CD4-positive, alpha-beta T cell (primary cell): ENCODE measurements at regions of chr11 and their contacts with region 1.

Region 1: DNA sequence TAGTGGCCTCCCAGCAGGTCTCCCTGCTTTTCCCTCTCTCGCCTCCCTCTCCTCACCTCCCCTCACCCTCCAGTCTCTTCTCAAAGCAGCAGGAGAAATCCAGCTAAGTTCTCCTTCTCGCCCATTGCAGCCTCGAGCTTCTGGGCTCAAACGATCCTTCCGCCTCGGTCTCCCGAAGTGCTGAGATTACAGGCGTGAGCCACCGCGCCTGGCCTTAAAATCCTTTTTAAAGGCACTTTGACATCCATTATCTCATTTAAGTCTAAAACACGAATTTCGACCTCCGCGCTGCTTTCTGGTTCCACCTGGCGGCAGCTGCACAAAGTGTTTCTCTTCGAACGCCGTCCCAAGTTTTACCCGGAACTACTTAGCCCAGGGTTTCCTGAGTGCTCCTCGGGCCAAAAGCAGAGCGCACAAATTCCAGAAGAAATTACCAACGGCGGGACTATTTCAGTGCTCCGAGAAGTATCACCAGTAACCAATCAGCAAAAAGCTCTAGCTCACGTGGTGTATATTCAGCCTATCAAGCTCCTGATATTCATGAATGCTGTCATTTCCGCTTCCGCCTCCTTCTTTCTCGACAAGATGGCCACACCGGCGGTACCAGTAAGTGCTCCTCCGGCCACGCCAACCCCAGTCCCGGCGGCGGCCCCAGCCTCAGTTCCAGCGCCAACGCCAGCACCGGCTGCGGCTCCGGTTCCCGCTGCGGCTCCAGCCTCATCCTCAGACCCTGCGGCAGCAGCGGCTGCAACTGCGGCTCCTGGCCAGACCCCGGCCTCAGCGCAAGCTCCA is at the start of gene EIF3F:
- DNase-seq: peak; percentile 78 to 99 (median 85)
- ATAC-seq: peak; percentile 95
- H3K4me3 ChIP-seq: peak within 1 kb of the TSS; percentile 67
- H3K4me3 Mint-ChIP-seq: peak within 1 kb of the TSS; percentile 88
- H3K27ac ChIP-seq: peak within 1 kb of the TSS; percentile 52 to 73
- H3K27ac Mint-ChIP-seq: peak within 1 kb of the TSS; percentile 79
- H3K4me1 ChIP-seq: peaks cover 27% of the 10 kb centered on the region
- H3K4me1 Mint-ChIP-seq: peaks cover 47% of the 10 kb centered on the region
- H3K27me3 ChIP-seq: no peaks in the 10 kb centered on the region
- H3K27me3 Mint-ChIP-seq: no peaks in the 10 kb centered on the region
- CTCF ChIP-seq: peak; percentile 92
- total RNA-seq, gene EIF3F: 338 to 348 TPM

Region 2: GRCh38 chr11:6481012-6481923 is 1505.7 kb before region 1 on chr11 and contains the starts of genes ARFIP2 and TIMM10B:
- CTCF ChIA-PET with region 1: no interaction called
- POLR2A ChIA-PET with region 1: interaction called, 3 read pairs
- intact Hi-C with region 1: loop called in 1 of 2 experiments (anchors 5 kb)
- DNase-seq: peak; percentile 92 to 99 (median 96)
- ATAC-seq: peak; percentile 94
- H3K4me3 ChIP-seq: peak within 1 kb of the TSS; percentile 83
- H3K4me3 Mint-ChIP-seq: peak within 1 kb of the TSS; percentile 98
- H3K27ac ChIP-seq: peak within 1 kb of the TSS; percentile 87 to 95
- H3K27ac Mint-ChIP-seq: peak within 1 kb of the TSS; percentile 99
- H3K4me1 ChIP-seq: peaks cover 39% of the 10 kb centered on the region
- H3K4me1 Mint-ChIP-seq: peaks cover 42% of the 10 kb centered on the region
- H3K27me3 ChIP-seq: no peaks in the 10 kb centered on the region
- H3K27me3 Mint-ChIP-seq: no peaks in the 10 kb centered on the region
- CTCF ChIP-seq: no peak
- total RNA-seq, gene ARFIP2: 78.1 to 80.5 TPM
- total RNA-seq, gene TIMM10B: 68.5 to 68.6 TPM

Region 3: DNA sequence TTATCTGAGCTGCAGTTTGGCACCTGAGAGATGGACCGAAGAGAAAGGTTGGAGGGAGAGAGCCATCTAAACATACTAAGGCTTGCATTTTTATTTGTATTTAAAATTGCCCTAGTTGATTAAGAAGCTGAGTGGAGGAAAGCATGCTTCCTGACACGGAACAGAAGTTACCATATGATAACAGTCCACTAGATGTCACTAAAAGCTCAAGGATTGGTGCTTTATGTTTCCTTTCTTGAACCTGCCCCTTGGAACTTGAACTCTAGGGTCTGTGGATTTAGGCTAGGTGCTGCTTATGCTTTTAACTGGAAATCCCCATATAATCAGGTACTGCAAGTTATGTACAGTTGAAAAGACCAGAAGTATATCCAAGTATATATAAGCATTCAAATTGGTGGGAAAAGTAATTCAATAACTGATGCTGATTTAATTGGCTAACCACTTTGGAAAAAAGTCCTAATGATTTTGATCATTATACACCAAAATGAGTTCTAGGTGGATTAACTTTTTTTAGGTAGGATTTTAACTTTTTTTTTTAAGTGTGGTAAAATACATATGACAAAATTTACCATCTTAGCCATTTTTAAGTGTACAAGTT is 888.6 kb before region 1 on chr11:
- CTCF ChIA-PET with region 1: no interaction called
- POLR2A ChIA-PET with region 1: interaction called, 3 read pairs
- intact Hi-C with region 1: loop called in 1 of 2 experiments (anchors 10 kb)
- DNase-seq: peak in 3 of 14 experiments; percentile 47 to 73 (median 64)
- ATAC-seq: peak; percentile 54
- H3K4me3 ChIP-seq: no peak overlapping the region
- H3K4me3 Mint-ChIP-seq: no peak overlapping the region
- H3K27ac ChIP-seq: no peak overlapping the region
- H3K27ac Mint-ChIP-seq: no peak overlapping the region
- H3K4me1 ChIP-seq: no peaks in the 10 kb centered on the region
- H3K4me1 Mint-ChIP-seq: no peaks in the 10 kb centered on the region
- H3K27me3 ChIP-seq: peaks cover 0 to 30% of the 10 kb centered on the region in 2 experiments
- H3K27me3 Mint-ChIP-seq: peaks cover 31% of the 10 kb centered on the region
- CTCF ChIP-seq: peak; percentile 72

Region 4: GRCh38 chr11:7688238-7688826 is 298.6 kb before region 1 on chr11:
- CTCF ChIA-PET with region 1: no interaction called
- POLR2A ChIA-PET with region 1: no interaction called
- intact Hi-C with region 1: loop called in 1 of 2 experiments (anchors 10 kb)
- DNase-seq: peak in 4 of 14 experiments; percentile 13 to 55 (median 36)
- ATAC-seq: peak; percentile 51
- H3K4me3 ChIP-seq: no peak overlapping the region
- H3K4me3 Mint-ChIP-seq: no peak overlapping the region
- H3K27ac ChIP-seq: no peak overlapping the region
- H3K27ac Mint-ChIP-seq: no peak overlapping the region
- H3K4me1 ChIP-seq: no peaks in the 10 kb centered on the region
- H3K4me1 Mint-ChIP-seq: no peaks in the 10 kb centered on the region
- H3K27me3 ChIP-seq: peaks cover 8 to 28% of the 10 kb centered on the region in 2 experiments
- H3K27me3 Mint-ChIP-seq: peaks cover 47% of the 10 kb centered on the region
- CTCF ChIP-seq: peak; percentile 89

Region 5: GRCh38 chr11:8020244-8020597 is 33.3 kb after region 1 on chr11:
- CTCF ChIA-PET with region 1: interaction called, 10 read pairs
- POLR2A ChIA-PET with region 1: interaction called, 3 read pairs
- intact Hi-C with region 1: no loop called
- DNase-seq: peak in 1 of 14 experiments; percentile 31
- ATAC-seq: no peak
- H3K4me3 ChIP-seq: peak overlapping the region; percentile 44
- H3K4me3 Mint-ChIP-seq: peak overlapping the region; percentile 87
- H3K27ac ChIP-seq: no peak overlapping the region
- H3K27ac Mint-ChIP-seq: no peak overlapping the region
- H3K4me1 ChIP-seq: peaks cover 13% of the 10 kb centered on the region
- H3K4me1 Mint-ChIP-seq: peaks cover 20% of the 10 kb centered on the region
- H3K27me3 ChIP-seq: peaks cover 16 to 41% of the 10 kb centered on the region in 2 experiments
- H3K27me3 Mint-ChIP-seq: peaks cover 51% of the 10 kb centered on the region
- CTCF ChIP-seq: no peak

Region 6: GRCh38 chr11:8964324-8965320 is 977.7 kb after region 1 on chr11 and contains the start of gene TMEM9B:
- CTCF ChIA-PET with region 1: no interaction called
- POLR2A ChIA-PET with region 1: interaction called, 4 read pairs
- intact Hi-C with region 1: loop called in 1 of 2 experiments (anchors 5 kb)
- DNase-seq: peak; percentile 50 to 87 (median 70)
- ATAC-seq: peak; percentile 72
- H3K4me3 ChIP-seq: peak within 1 kb of the TSS; percentile 98
- H3K4me3 Mint-ChIP-seq: peak within 1 kb of the TSS; percentile 97
- H3K27ac ChIP-seq: peak within 1 kb of the TSS; percentile 91 to 96
- H3K27ac Mint-ChIP-seq: peak within 1 kb of the TSS; percentile 97
- H3K4me1 ChIP-seq: peaks cover 28% of the 10 kb centered on the region
- H3K4me1 Mint-ChIP-seq: peaks cover 35% of the 10 kb centered on the region
- H3K27me3 ChIP-seq: no peaks in the 10 kb centered on the region
- H3K27me3 Mint-ChIP-seq: no peaks in the 10 kb centered on the region
- CTCF ChIP-seq: no peak
- total RNA-seq, gene TMEM9B: 20.5 to 22.1 TPM